PC-3 (cell line): ENCODE measurements at regions of chr10 and their contacts with region 1.

Region 1: GRCh38 chr10:69786791-69787190 is 14.9 kb upstream of the COL13A1 start:
- DNase-seq: peak; percentile 82
- ATAC-seq: peak; percentile 92
- H3K4me3 ChIP-seq: no peak overlapping the region
- H3K27ac ChIP-seq: no peak overlapping the region
- H3K4me1 ChIP-seq: no peaks in the 10 kb centered on the region
- H3K27me3 ChIP-seq: peaks cover 27% of the 10 kb centered on the region
- CTCF ChIP-seq: peak; percentile 83

Region 2: DNA sequence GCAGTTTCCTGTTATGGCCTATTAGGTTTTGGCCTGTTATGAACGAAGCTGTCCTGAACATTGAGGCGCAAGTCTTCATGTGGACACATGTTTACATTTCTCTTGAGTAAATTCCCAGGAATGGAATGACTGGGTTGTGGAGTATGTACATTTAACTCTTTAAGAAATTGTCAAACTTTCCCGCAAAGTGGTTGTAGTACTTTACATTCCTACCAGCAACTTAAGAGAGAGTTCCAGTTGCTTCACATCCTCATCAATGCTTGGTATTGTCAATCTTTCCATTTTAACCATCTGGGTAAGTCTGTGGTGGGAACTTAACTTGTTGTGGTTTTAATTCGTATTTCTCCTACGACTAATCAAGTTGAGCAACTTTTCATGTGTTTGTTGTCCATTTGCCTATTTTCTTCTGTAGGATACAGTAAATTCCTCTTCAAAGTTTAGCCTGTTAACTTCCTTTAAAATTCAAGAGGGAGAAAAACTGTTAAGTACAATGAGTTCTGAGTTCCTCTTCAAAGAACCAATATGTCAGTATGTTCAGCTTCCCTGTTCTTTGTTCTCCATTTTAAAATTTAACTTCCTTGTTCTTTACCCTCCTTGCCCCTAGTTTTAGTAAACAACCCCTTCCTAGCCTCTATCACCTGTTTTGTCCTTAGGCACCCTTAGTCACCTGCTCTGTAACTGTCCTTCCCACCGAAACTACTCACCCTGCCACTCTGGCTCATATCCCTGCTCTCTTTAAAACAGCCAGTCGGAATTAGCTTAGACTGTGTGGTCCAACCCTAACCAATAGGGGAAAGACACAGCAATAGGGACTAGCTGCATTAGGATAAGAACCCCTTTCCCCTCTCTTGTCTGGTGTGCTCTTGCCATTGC is 82.8 kb before region 1 on chr10:
- CTCF ChIA-PET with region 1: no interaction called
- POLR2A ChIA-PET with region 1: no interaction called
- intact Hi-C with region 1: no loop called
- DNase-seq: peak; percentile 96
- ATAC-seq: peak; percentile 84
- H3K4me3 ChIP-seq: no peak overlapping the region
- H3K27ac ChIP-seq: peak overlapping the region; percentile 73
- H3K4me1 ChIP-seq: peaks cover 18% of the 10 kb centered on the region
- H3K27me3 ChIP-seq: peaks cover 20% of the 10 kb centered on the region; the same call in 1 of the 2 replicates
- CTCF ChIP-seq: no peak

Region 3: DNA sequence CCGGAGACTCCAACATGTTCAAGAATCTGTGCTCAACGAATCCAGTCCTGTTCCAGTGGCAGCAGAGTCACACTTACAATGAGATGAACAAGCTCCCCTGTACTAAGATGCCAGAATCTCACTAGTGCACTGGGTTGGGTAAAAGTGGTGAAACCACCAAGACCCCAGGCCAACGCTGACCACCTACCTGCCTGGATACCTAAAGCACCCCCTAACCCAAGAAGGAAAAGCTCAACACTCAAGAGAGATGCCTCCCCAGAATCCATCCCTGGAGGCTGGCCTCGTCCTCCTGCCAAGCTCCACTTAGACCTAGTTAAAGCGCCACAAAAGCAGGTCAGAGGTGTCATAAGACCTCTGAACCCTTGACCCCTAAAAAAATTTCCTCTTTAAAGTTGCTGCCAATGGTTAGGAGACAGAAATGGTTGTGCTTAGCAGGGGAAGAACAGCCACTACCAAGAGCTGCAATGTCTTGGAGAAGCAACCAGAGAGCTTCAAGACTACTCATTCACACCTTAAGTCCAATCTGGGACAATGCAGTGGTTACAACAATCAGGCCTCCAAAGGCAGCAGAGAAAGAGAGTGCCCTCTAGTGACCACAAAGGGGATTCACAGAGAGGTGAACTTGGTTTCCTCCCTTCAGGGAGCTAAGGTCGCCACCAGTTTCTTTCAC is 171.2 kb after region 1 on chr10:
- CTCF ChIA-PET with region 1: interaction called, 24 read pairs
- POLR2A ChIA-PET with region 1: no interaction called
- intact Hi-C with region 1: loop called (anchors 5 kb)
- DNase-seq: peak; percentile 88
- ATAC-seq: peak; percentile 81
- H3K4me3 ChIP-seq: no peak overlapping the region
- H3K27ac ChIP-seq: no peak overlapping the region
- H3K4me1 ChIP-seq: no peaks in the 10 kb centered on the region
- H3K27me3 ChIP-seq: no peaks in the 10 kb centered on the region
- CTCF ChIP-seq: peak; percentile 100